Cardiac septum (tissue), 1 donor: ENCODE measurements at regions of chr1 and their contacts with region 1.

Region 1: GRCh38 chr1:53485478-53486394 is 26.5 kb downstream of the DMRTB1 start:
- DNase-seq: no peak

Region 2: DNA sequence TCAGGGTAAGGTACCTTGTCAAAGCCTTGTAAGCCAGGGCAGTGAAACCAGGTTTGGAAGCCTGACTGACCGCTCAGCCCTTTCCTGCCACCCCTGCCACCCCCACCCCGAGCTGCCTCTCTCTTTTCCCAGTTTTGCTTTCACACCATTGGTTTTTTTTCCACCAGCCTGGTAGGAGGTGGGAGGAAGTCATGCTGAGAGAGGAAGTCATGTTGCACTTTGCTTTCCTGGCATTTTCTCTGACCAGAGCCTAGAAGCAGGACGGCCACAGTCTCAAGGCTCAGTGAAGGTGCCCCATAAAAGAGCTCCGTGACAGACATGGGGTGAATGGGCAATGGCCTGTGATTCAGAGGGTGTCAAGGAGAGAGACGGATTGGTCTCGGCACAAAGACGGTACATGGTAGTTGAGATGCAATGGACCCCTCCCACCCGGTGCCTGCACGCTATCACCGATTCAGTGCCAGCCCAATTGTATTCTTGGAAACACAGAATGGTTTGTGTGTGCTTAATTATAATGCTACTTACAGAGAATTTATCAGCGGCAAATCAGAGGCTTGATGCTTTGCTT is 68.6 kb before region 1 on chr1:
- intact Hi-C with region 1: no loop called
- DNase-seq: no peak

Region 3: DNA sequence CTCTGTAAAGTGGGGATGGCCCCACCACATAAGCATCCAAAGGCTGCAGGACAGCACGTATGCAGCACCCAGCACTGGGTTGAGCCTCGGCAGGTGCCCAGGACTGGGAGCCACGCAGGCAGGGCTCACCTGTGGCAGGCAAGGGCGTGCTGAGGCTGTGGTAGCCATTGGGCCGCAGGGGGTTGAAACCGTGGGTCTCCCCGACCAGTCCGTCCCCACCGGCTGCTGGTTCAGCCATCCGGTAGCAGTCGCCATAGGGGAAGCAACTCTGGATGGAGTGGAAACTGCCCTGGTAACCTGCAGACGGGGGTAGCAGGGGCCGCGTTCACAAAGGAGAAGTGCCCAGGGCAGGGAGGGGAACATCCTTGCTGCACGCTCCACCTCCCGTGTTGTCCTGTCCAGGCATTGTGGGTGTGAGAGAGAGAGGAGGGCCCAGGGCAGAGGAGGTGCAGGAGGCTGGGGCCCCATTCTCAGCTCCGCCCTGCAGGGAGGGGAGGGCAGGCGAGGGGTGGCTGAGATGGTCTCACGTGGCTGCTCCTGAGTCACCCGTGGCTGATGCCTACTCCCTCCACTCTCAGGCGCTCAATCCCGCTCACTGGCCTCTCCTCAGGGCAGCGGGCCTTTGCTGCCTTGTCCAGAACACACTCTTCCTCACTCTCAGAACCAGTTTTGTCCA is 23.4 kb after region 1 on chr1:
- intact Hi-C with region 1: no loop called
- DNase-seq: no peak

Region 4: DNA sequence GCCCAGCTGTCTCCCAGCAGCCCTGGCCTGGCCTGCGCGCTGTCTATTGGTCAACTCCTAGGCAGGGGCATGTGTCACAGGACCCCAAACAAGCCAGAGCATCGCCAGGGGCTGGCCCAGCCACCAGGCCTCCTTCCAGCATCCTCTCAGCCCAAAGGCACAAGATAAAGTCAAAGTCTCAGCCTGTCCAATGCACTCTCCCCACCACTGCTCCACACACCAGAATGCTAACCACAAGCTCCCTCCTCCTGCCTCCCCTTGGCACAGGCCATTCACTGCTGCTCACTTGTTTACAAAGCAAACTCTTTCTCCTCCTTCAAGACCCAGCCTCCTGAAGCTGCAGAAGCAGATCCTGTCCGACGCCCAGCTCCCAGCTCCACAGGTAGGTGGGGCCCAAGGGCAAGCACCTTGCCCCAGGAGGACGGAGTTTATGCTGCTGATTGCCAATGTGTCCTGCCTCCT is 106.8 kb after region 1 on chr1:
- intact Hi-C with region 1: loop called (anchors 10 kb)
- DNase-seq: peak; percentile 79

Region 5: DNA sequence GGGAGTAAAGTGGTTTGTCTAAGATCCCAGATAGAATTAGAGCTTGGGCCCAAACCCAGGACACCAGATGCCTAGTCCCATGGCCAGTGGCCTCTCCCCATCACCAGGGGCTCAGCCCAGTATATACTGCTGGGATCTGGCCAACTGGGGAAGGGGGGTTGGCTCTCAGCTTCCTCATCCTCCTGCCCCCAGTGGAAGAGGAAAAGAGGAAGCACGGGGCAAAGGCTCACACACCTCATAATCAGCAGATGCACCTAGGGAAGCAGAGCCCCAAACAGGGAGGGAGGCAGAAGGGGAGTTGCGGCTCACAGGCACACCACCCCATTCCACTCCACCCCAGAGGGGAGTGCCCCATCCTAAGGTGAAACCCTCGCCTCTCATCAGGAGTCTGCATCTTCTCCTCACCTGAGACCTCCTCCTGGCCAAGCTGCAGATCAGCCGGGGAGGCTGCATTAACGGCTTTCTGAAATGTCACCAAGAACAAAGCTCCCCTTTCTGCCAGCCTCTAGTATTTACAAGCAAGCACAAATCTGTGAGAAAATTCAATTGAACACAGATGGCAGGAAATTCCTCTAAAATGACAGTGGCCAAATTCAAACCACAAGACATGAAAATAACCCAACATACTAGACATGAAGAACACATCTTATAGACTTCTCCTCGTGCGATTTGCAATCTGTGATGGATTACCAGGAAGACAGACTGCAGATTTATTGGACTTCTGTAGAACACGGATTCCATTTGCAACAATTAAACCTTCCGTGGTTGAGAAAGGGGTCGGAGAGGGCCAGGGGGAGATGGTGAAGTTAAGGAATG is 170.4 kb after region 1 on chr1:
- intact Hi-C with region 1: no loop called
- DNase-seq: peak; percentile 62

Region 6: DNA sequence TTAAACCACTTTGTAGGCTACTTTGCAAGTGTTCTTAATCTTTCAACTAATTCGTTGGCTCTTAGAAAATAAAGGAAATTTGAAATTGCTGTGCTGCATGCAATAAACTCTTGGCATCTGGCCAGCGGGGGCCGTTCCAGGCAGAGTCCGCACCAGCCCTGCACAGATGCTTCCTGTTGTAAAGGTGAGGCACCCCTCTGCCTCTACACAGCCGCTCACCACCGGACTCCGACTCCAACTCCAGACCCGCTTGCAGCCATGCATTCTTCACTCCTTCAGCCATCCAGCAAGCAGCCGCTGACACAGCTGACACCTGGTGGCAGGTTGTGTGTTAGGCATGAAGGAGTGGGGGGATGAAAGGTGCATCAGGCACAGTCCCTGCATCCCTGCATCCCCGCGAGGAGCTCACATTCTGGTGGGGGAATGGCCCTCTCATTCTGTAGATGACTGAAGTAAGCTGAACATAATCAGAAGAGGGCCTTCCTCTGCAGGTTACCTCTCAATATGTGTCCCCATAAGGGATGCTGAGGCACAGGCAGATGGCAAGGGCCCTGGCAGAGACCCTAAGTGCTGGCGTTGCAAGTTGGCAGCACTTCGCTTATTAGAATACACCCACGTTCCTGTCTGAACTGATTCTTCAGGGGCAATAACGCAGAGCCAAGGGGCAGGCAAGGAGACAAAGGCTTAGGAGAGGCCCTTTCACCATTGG is 196.4 kb after region 1 on chr1:
- intact Hi-C with region 1: loop called (anchors 1 kb)
- DNase-seq: no peak

Region 7: GRCh38 chr1:53715478-53715877 is 229.7 kb after region 1 on chr1:
- intact Hi-C with region 1: no loop called
- DNase-seq: no peak

Region 8: GRCh38 chr1:53754484-53755312 is 269.0 kb after region 1 on chr1:
- intact Hi-C with region 1: loop called (anchors 1 kb)
- DNase-seq: no peak